ENCODE measurements at regions of chr10 and their contacts with region 1.

Region 1: DNA sequence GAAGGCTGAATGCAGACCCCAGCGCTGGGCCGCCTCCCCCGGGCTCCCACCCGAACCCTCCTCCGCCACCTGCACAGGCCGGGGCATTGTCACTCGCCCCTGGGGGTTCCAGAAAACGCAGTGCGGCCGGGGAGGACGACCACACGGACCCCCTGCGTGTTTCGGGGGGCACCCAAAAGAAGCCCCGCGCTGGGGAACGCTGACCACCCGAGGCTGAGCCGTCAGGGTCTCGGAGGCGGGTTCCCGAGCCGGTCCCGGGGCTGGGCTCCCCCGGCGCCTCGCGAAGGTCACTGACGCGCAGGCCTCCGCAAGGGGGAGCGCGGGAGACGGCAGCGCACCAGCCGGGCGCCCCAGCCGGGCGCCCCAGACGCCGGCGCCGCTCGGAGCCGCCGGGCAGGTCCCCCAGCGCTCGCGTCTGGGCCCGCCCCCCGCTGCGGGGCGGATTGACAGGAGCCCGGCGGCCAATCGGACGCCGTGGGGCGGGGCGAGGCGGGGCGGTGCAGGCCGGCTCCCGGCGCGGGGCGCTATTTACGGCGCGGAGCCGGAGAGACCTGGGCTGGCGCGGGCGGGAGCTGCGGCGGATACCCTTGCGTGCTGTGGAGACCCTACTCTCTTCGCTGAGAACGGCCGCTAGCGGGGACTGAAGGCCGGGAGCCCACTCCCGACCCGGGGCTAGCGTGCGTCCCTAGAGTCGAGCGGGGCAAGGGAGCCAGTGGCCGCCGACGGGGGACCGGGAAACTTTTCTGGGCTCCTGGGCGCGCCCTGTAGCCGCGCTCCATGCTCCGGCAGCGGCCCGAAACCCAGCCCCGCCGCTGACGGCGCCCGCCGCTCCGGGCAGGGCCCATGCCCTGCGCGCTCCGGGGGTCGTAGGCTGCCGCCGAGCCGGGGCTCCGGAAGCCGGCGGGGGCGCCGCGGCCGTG is at the start of gene BAMBI:
- DNase-seq: peak; percentile 91
- H3K4me3 ChIP-seq: peak within 1 kb of the TSS; percentile 39
- H3K27ac ChIP-seq: no peak within 1 kb of the TSS
- H3K4me1 ChIP-seq: peaks cover 3% of the 10 kb centered on the region
- H3K27me3 ChIP-seq: peaks cover 33% of the 10 kb centered on the region
- CTCF ChIP-seq: peak; percentile 54
- total RNA-seq, gene BAMBI: 3.1 to 4.6 TPM

Region 2: GRCh38 chr10:26903431-26904217 is 1773.6 kb before region 1 on chr10:
- intact Hi-C with region 1: no loop called
- DNase-seq: no peak
- H3K4me3 ChIP-seq: no peak overlapping the region
- H3K27ac ChIP-seq: no peak overlapping the region
- H3K4me1 ChIP-seq: no peaks in the 10 kb centered on the region
- H3K27me3 ChIP-seq: no peaks in the 10 kb centered on the region
- CTCF ChIP-seq: no peak

Region 3: DNA sequence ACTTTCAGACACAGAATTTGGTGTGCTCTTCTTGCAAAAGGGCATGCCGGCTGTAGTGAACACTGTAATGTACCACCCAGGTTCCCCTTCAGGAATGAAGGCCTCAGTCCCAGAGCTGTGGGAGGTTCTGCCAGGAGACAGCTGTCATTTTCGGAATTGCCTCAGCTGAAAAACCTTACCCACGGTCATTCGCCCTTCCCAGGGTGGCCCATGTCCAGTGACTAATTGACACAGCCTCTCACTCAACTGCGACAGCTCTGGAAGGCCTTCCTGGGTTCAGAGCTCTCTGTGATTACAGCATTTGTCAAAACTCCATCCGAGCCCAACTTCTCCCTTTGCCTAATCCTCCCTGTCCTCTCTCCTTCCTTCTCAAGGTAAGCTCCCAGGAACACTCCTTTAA is 188.0 kb before region 1 on chr10:
- intact Hi-C with region 1: no loop called
- DNase-seq: no peak
- H3K4me3 ChIP-seq: no peak overlapping the region
- H3K27ac ChIP-seq: no peak overlapping the region
- H3K4me1 ChIP-seq: no peaks in the 10 kb centered on the region
- H3K27me3 ChIP-seq: no peaks in the 10 kb centered on the region
- CTCF ChIP-seq: no peak

Region 4: DNA sequence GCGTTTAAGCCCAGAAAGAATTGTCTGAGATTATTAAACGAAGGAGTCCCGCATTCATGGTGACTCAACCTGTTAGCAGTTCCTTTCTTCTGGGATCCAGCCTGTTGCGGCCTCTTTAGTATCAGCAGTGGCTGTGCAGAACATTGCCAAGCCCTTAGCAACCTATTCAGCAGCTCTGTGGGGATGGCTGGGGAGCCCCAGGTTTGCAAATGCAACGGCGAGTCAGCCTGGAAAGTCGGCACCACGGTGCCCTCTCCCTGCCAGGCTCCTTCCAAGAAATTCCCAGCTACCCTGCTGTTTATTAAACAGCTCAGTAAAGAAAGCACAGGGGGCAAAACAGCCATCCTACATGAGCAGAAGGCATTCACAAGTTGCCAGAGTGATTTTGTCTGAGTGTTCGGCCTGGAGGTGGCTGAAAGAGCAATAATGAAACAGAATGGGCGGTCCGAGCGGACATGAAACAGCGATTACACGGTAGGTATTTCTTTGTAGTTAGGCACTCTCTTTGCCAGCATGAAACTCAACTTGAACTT is 198.4 kb after region 1 on chr10:
- intact Hi-C with region 1: loop called (anchors 10 kb)
- DNase-seq: no peak
- H3K4me3 ChIP-seq: no peak overlapping the region
- H3K27ac ChIP-seq: no peak overlapping the region
- H3K4me1 ChIP-seq: no peaks in the 10 kb centered on the region
- H3K27me3 ChIP-seq: no peaks in the 10 kb centered on the region
- CTCF ChIP-seq: no peak

Region 5: DNA sequence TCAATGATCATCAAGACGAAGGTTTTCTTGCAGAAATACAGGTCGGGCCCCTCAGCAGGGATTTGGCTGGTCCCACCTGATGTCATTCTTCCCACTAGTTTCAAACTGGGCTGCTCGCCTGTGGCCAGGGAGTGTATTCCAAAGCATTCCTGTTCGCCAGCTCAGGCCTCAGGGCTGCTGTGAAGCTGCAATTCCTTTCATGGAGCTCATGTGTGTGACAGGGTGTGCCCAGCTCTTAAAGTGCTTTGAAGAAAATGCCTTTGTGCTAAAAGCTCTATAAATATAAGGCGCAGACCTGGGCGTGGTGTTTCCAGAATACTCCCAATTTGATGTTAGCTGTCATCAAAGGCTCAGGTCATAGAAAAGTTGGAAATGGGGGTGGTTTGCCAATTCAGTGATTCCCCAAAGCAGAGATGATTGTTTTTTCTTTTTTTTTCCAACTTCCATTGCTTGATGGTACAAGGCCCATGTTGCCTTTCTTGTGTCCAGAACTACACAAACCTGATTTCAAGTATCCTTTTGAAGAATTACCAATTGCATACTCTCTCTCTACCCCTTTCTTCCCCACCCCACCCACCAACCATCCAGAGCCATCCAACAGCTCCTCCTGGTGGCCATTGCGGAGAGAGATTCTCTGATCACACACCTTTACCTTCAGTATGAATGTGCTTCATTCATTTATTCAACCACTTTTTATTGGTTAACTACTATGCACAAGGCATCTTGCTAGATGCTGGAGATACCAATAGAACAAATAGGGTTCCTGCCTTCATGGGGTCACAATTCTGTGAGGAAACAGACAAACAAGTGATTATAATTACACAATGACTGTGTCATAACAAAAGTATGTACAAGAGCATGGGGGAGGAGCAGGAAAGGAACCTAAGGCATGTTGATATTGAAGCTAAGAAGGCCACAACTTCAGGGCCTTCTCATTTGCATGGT is 314.4 kb after region 1 on chr10:
- intact Hi-C with region 1: loop called (anchors 5 kb)
- DNase-seq: peak; percentile 55
- H3K4me3 ChIP-seq: no peak overlapping the region
- H3K27ac ChIP-seq: no peak overlapping the region
- H3K4me1 ChIP-seq: no peaks in the 10 kb centered on the region
- H3K27me3 ChIP-seq: no peaks in the 10 kb centered on the region
- CTCF ChIP-seq: peak; percentile 62

Region 6: DNA sequence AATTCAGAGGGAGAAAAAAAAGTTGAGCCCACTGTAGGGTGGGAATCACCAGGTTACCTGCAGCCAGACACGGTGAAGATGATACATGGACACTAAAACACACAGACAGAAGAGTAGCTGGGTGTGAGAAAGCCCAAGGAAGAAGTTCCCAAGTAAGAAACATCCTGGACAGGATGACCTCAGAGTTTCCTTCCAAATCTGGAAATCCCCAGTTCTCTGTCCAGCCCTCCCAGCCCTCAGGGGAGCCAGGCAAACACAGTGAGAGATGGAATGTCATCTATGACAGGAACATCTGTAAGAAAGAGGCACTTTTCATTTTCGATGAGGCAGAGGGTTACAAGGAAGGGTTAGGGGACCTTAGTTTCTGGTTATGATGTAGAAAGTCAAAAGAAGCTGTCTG is 486.5 kb after region 1 on chr10:
- intact Hi-C with region 1: no loop called
- DNase-seq: no peak
- H3K4me3 ChIP-seq: no peak overlapping the region
- H3K27ac ChIP-seq: no peak overlapping the region
- H3K4me1 ChIP-seq: no peaks in the 10 kb centered on the region
- H3K27me3 ChIP-seq: no peaks in the 10 kb centered on the region
- CTCF ChIP-seq: no peak